A673 (cell line): ENCODE measurements at regions of chr9 and their contacts with region 1.

Region 1: GRCh38 chr9:34701769-34702736 is 7.9 kb downstream of the CCL21 start:
- DNase-seq: peak; percentile 81
- H3K4me3 ChIP-seq: peak overlapping the region; percentile 61
- H3K27ac ChIP-seq: no peak overlapping the region
- H3K4me1 ChIP-seq: no peaks in the 10 kb centered on the region
- H3K27me3 ChIP-seq: peaks cover 5% of the 10 kb centered on the region
- CTCF ChIP-seq: peak; percentile 99

Region 2: GRCh38 chr9:34675048-34675714 is 26.9 kb before region 1 on chr9:
- CTCF ChIA-PET with region 1: interaction called, 5 read pairs
- POLR2A ChIA-PET with region 1: no interaction called
- intact Hi-C with region 1: loop called (anchors 2 kb)
- DNase-seq: peak; percentile 88
- H3K4me3 ChIP-seq: no peak overlapping the region
- H3K27ac ChIP-seq: no peak overlapping the region
- H3K4me1 ChIP-seq: no peaks in the 10 kb centered on the region
- H3K27me3 ChIP-seq: no peaks in the 10 kb centered on the region
- CTCF ChIP-seq: peak; percentile 88